ENCODE measurements at regions of chr12 and their contacts with region 1.

Region 1: GRCh38 chr12:57852620-57853500 is 6.3 kb upstream of the CTDSP2 start:
- DNase-seq: peak; percentile 54 to 66
- H3K4me3 ChIP-seq: peak overlapping the region in 2 of 3 donors; percentile 13 to 43
- H3K27ac ChIP-seq: peak overlapping the region; percentile 41 to 70 (median 56)
- H3K4me1 ChIP-seq: peaks cover 12 to 19% of the 10 kb centered on the region in 2 donors
- H3K27me3 ChIP-seq: no peaks in the 10 kb centered on the region
- CTCF ChIP-seq: peak in 3 of 6 experiments; percentile 4 to 29 (median 12)
- POLR2A ChIP-seq: no peak

Region 2: GRCh38 chr12:57893431-57894353 is 40.8 kb after region 1 on chr12:
- intact Hi-C with region 1: loop called (anchors 5 kb)
- DNase-seq: peak; percentile 88 to 94
- H3K4me3 ChIP-seq: no peak overlapping the region
- H3K27ac ChIP-seq: peak overlapping the region; percentile 91 to 98 (median 95)
- H3K4me1 ChIP-seq: peaks cover 50 to 90% of the 10 kb centered on the region in 2 donors
- H3K27me3 ChIP-seq: no peaks in the 10 kb centered on the region
- CTCF ChIP-seq: peak in 2 of 6 experiments; percentile 7 to 11
- POLR2A ChIP-seq: peak in 1 of 2 donors; percentile 33

Region 3: GRCh38 chr12:57941165-57941894 is 88.5 kb after region 1 on chr12 and contains the start of gene ATP23:
- intact Hi-C with region 1: no loop called
- DNase-seq: peak; percentile 93 to 95
- H3K4me3 ChIP-seq: peak within 1 kb of the TSS; percentile 43 to 72 (median 71)
- H3K27ac ChIP-seq: peak within 1 kb of the TSS; percentile 58 to 87 (median 74)
- H3K4me1 ChIP-seq: peaks cover 3 to 11% of the 10 kb centered on the region in 2 donors
- H3K27me3 ChIP-seq: no peaks in the 10 kb centered on the region
- CTCF ChIP-seq: no peak
- POLR2A ChIP-seq: peak; percentile 60 to 94
- total RNA-seq, gene ATP23: 1.9 to 13.4 (median 11.1) TPM

Region 4: DNA sequence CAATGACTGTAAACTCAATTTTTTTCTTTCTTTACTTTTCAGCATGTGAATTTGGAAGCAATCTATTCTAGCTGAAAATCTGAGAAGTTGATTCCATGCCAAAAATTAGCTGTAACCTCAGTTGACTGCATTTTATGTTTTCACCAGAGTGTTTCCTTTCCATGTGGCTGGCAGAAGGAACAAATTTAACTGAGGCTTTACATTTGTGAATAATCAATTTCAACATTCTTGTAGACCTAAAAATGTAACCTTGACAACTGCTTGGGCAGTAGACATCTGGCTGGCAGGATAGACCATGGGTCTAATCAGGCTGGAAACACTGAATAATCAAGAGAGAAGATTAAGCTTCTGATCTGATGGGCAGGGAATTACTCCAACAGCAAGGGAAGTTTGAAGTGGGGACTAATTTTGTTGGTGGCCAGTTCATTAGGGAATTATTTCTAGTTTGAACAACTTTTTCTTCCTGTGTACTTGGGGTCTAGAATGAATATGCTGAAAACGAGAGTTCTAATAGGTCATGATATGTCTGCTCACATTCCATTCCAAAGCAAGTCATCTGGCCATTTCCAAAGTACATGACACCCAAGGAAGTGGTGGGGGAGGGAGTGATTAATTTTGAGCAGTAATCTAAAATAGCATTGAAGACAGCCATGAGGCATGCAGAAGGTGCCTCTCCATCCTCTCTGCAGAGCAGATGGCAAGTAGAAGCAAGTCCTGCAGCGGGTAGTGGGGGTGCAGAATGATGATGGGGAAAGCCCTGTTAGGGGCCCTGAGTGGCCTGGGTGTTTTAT is 156.7 kb after region 1 on chr12:
- intact Hi-C with region 1: no loop called
- DNase-seq: no peak
- H3K4me3 ChIP-seq: no peak overlapping the region
- H3K27ac ChIP-seq: no peak overlapping the region
- H3K4me1 ChIP-seq: no peaks in the 10 kb centered on the region
- H3K27me3 ChIP-seq: no peaks in the 10 kb centered on the region
- CTCF ChIP-seq: no peak
- POLR2A ChIP-seq: no peak